ENCODE measurements at regions of chr11 and their contacts with region 1.

Region 1: DNA sequence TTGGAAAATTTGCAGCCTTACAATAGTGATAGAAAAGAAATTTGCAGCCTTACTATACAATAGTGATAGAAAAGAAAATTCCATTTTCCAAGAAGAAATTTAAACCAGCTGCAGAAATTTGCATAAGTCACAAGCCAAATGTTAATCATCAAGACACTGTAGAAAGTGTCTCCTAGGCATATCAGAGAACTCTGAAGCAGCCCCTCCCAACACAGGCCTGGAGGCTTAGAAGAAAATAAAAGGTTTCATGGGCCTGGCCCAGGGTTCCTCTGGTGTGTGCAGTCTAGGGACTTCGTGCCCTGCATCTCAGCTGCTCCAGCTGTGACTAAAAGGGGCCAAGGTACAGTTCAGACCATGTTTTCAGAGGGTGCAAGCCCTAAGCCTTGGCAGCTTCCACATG is 6.0 kb downstream of the OR4A16 start:
- DNase-seq: no peak
- H3K4me3 ChIP-seq: no peak overlapping the region
- H3K27ac ChIP-seq: no peak overlapping the region
- H3K4me1 ChIP-seq: no peaks in the 10 kb centered on the region
- H3K27me3 ChIP-seq: no peaks in the 10 kb centered on the region
- CTCF ChIP-seq: no peak
- POLR2A ChIP-seq: no peak

Region 2: GRCh38 chr11:55367674-55368073 is 18.6 kb after region 1 on chr11 and contains the start of gene OR4A15:
- intact Hi-C with region 1: no loop called
- DNase-seq: no peak
- H3K4me3 ChIP-seq: no peak within 1 kb of the TSS
- H3K27ac ChIP-seq: no peak within 1 kb of the TSS
- H3K4me1 ChIP-seq: no peaks in the 10 kb centered on the region
- H3K27me3 ChIP-seq: no peaks in the 10 kb centered on the region
- CTCF ChIP-seq: no peak
- POLR2A ChIP-seq: no peak
- total RNA-seq, gene OR4A15: not detected

Region 3: DNA sequence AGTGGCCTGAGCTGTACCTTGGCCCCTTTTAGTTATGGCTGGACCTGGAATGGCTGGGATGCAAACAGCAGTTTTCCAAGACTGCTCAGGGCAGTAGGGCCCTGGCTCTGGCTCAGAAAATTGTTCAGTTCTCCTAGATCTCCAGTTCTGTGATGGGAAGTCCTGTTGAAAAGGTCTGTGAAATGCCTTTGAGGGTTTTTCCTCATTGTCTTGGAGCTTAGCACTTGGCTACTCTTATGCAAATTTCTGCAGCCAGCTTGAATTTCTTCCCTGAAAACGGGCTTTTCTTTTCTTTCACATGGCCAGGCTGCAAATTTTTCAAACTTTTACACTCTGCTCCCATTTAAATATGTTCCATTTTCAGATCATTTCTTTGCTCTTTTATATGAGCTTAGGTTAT is 52.0 kb after region 1 on chr11:
- intact Hi-C with region 1: loop called (anchors 10 kb)
- DNase-seq: no peak
- H3K4me3 ChIP-seq: no peak overlapping the region
- H3K27ac ChIP-seq: no peak overlapping the region
- H3K4me1 ChIP-seq: no peaks in the 10 kb centered on the region
- H3K27me3 ChIP-seq: no peaks in the 10 kb centered on the region
- CTCF ChIP-seq: no peak
- POLR2A ChIP-seq: no peak